GM12878 (cell line): ENCODE measurements at regions of chr7 and their contacts with region 1.

Region 1: DNA sequence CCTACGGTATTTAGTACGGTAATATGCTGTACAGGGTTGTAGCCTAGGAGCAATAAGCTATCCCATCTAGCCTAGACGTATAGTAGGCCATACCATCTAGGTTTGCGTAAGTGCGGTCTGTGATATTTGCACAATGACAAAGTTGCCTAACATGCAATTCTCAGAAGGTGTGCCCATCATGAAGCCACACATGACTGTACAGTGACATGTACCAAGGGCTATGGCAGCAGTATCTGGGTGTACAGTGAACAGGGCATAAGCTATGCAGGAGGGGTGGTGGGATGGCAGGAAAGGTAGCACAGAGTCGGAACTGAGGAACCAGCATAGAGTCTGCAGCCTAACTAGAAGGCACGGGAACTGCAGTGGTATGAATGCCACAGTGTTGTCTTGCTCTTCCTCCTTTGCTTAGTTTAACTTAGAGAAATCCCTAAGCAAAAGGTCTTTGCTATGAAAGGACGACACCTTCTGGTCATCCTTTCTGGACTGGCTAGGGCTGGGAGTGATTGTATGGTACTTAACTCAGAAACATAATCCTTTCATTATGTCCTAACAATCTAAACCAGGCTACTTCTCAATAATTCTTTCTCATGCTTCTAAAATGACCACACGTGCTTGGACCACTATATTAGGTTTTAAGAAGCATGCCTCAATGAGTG is 93.5 kb downstream of the DYNC1I1 start:
- DNase-seq: no peak
- ATAC-seq: peak; percentile 46
- H3K4me3 ChIP-seq: no peak overlapping the region
- H3K27ac ChIP-seq: no peak overlapping the region
- H3K4me1 ChIP-seq: no peaks in the 10 kb centered on the region
- H3K27me3 ChIP-seq: no peaks in the 10 kb centered on the region
- CTCF ChIP-seq: peak in 1 of 3 experiments; percentile 34; a peak in 1 of 6 replicates
- EP300 ChIP-seq: no peak
- POLR2A ChIP-seq: no peak
- RAD21 ChIP-seq: no peak

Region 2: DNA sequence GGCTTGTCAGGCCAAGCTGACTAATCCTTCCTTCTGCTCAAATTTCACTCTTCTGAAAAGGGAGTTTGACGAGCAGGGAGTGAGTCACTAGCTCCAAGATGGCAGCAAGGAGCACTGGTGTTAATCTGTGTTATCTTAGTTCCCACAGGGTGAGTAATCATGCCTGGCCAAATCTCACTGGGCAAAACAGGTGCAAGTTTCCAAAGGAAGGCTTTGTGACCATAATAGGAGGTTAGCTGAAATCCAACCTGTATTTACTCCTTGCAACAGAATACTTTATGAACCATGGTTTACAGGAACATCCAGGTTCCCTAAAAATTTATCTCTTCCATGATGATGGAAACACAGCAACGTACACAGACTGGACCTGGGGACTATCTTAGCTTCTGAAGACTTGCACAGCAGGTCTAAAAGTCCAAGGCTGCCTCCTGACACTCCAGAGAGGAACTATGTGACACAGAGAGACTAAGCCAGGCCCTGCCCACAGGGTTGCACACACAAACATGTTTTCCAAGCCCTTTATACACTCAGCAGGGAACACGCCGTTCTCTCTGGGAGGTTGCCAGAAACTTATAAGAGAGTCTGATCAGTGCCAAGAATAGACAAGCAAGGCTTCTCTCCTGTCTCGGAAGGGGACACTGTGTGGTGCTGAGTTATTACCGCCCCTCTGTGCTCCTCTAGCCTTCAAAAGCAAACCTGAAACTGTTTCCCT is 315.9 kb before region 1 on chr7:
- CTCF ChIA-PET with region 1: no interaction called
- POLR2A ChIA-PET with region 1: no interaction called
- RAD21 ChIA-PET with region 1: no interaction called
- SMC1A ChIA-PET with region 1: no interaction called
- in situ Hi-C with region 1: no loop called
- intact Hi-C with region 1: no loop called
- DNase-seq: no peak
- ATAC-seq: no peak
- H3K4me3 ChIP-seq: no peak overlapping the region
- H3K27ac ChIP-seq: no peak overlapping the region
- H3K4me1 ChIP-seq: no peaks in the 10 kb centered on the region
- H3K27me3 ChIP-seq: no peaks in the 10 kb centered on the region; a peak in 1 of 4 replicates
- CTCF ChIP-seq: no peak
- EP300 ChIP-seq: no peak
- POLR2A ChIP-seq: no peak
- RAD21 ChIP-seq: no peak

Region 3: DNA sequence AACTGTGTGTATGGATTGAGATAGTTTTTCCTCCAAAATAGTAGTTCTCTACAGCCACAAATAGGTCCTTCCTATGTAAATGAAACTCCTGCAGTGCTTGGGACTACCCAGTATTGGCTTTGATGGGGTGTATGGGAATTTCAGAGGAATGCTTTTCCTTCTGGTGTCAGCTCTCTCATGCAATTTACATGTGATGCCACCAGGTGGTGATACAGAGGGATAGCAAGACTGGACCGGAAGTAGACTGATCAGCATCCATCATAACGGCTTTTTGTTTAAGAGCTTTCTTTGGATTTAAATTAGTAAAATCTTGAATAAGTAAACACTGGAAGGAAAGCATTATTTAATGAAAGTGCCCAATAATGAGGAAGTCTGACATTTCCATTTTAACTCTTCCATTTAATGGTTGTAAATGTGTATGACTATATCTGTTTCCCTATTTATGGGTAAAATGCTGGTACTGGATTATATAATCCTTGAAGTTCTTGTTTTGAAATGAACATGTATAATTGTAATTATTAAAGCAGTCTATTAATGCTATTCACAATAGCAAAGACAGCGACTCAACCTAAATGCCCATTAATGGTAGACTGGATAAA is 70.8 kb before region 1 on chr7:
- CTCF ChIA-PET with region 1: interaction called, 52 read pairs
- POLR2A ChIA-PET with region 1: no interaction called
- RAD21 ChIA-PET with region 1: interaction called, 15 read pairs
- SMC1A ChIA-PET with region 1: interaction called, 26 read pairs
- in situ Hi-C with region 1: no loop called
- intact Hi-C with region 1: loop called (anchors 2 kb)
- DNase-seq: no peak
- ATAC-seq: peak; percentile 70
- H3K4me3 ChIP-seq: no peak overlapping the region
- H3K27ac ChIP-seq: no peak overlapping the region
- H3K4me1 ChIP-seq: no peaks in the 10 kb centered on the region
- H3K27me3 ChIP-seq: peaks cover 0 to 2% of the 10 kb centered on the region in 2 experiments; a peak in 1 of 4 replicates
- CTCF ChIP-seq: peak; percentile 31 to 63 (median 56)
- EP300 ChIP-seq: no peak
- POLR2A ChIP-seq: no peak
- RAD21 ChIP-seq: 0 out of 2 replicates have a peak, but pooled peaks have one; percentile 29

Region 4: DNA sequence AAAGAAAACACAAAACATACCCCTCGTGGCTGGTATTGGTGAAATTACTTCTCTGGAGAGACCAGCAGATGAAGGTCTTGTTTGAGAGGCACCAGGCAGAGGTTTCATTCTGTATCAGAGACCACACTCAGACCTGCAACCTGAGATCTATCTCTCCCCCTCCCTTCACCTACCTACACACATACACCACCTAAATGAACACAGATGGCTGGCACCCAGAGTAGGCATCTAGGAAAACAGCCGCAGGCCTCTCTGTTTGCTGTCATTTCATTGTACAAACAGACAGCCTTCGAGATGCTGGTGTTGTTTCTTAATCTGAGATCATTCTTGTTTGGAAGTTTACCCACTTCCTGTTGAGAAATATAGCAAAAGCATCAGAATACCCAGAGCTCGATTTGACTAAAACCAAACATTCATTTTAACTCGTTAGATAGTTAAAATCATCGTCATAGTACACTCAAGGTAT is 629.9 kb after region 1 on chr7:
- CTCF ChIA-PET with region 1: no interaction called
- POLR2A ChIA-PET with region 1: no interaction called
- RAD21 ChIA-PET with region 1: no interaction called
- SMC1A ChIA-PET with region 1: no interaction called
- in situ Hi-C with region 1: no loop called
- intact Hi-C with region 1: no loop called
- DNase-seq: peak; percentile 3
- ATAC-seq: peak; percentile 82
- H3K4me3 ChIP-seq: no peak overlapping the region
- H3K27ac ChIP-seq: no peak overlapping the region
- H3K4me1 ChIP-seq: peaks cover 3% of the 10 kb centered on the region; the same call in 1 of the 2 replicates
- H3K27me3 ChIP-seq: no peaks in the 10 kb centered on the region
- CTCF ChIP-seq: no peak
- EP300 ChIP-seq: no peak
- POLR2A ChIP-seq: no peak
- RAD21 ChIP-seq: no peak